ENCODE measurements at regions of chr7 and their contacts with region 1.

Region 1: GRCh38 chr7:1086588-1087464 is 1.1 kb upstream of the GPER1 start:
- DNase-seq: peak; percentile 94
- CTCF ChIP-seq: peak; percentile 88

Region 2: DNA sequence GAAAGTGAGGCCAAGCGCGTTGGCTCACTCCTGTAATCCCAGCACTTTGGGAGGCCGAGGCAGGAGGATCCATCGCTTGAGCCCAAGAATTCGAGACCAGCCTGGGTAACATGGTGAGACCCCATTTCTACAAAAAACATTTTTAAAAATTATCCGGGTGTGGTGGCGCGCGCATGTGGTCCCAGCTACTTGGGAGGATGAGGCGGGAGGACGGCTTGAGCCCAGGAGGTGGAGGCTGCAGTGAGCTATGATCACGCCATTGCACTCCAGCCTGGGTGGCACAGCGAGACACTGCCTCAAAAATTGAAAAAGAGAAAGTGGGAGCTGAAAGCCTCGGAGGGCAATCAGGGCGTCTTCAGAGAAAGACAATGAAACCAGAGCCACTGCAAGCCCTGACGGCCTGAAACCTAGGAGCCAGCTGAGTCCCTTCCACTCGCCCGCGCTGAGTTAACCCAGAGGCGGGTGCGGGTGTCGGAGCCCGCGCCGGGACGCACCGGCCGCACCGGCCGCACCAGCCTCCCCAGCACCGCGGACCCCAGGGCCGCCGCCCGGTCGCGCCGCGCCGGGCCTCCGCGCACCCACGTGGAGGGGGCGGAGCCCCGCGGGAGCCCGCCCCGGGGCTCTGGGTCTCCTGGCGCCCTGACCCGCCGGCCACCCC is 50.8 kb after region 1 on chr7:
- in situ Hi-C with region 1: loop called (anchors 10 kb)
- DNase-seq: no peak
- CTCF ChIP-seq: no peak